Breast epithelium (tissue), 4 donors: ENCODE measurements at regions of chr1 and their contacts with region 1.

Region 1: DNA sequence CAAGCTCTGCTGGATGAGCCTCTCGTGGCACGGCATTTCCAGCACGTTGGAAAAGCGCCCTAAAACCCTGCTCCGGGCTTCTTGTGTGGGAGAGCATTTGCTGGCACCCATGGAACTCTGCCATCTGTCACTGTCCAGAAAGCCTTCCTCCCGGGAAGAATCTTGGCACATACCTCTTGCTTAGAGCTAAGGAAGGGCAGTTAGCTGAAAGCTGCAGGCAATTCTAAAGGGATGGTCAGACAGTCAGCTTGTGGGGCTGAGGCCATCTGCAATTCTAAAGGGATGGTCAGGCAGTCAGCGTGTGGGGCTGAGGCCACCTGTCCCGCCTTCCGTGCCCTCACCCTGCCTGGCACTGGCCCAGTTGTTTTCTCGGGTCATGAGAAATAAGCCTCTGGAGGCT is 139.0 kb upstream of the TMEM51 start:
- DNase-seq: no peak
- H3K4me3 ChIP-seq: no peak overlapping the region
- H3K27ac ChIP-seq: no peak overlapping the region
- H3K4me1 ChIP-seq: peaks cover 0 to 4% of the 10 kb centered on the region in 2 donors
- H3K27me3 ChIP-seq: no peaks in the 10 kb centered on the region
- CTCF ChIP-seq: no peak
- POLR2A ChIP-seq: no peak

Region 2: DNA sequence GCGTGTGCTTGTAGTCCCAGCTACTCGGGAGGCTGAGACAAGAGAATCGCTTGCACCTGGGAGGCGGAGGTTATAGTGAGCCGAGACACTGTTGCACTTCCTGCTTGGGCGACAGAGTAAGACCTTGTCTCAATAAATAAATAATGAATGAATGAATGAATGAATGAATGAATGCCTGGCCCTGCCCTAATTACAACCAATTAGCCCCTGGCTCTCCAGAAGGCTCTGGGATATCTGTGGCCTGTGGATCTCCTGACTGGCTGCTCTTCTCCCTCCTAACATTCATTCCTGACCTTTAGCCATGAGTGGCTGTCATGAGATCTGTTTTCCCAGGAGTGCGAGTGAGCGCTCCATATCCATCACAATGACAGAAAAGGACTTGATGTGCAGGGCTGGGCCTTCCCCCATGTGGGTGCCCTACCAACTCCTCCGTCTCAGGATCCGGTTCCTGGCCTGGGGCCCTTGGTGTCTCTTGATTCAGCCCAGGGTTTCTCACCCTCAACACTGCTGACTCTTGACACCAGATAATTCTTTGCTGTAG is 104.5 kb before region 1 on chr1:
- intact Hi-C with region 1: loop called (anchors 10 kb)
- DNase-seq: no peak
- H3K4me3 ChIP-seq: no peak overlapping the region
- H3K27ac ChIP-seq: peak overlapping the region; percentile 86 to 91
- H3K4me1 ChIP-seq: peaks cover 10 to 18% of the 10 kb centered on the region in 2 donors
- H3K27me3 ChIP-seq: no peaks in the 10 kb centered on the region
- CTCF ChIP-seq: no peak
- POLR2A ChIP-seq: no peak

Region 3: GRCh38 chr1:15062479-15063099 is 48.1 kb after region 1 on chr1:
- intact Hi-C with region 1: no loop called
- DNase-seq: no peak
- H3K4me3 ChIP-seq: no peak overlapping the region
- H3K27ac ChIP-seq: no peak overlapping the region
- H3K4me1 ChIP-seq: no peaks in the 10 kb centered on the region
- H3K27me3 ChIP-seq: no peaks in the 10 kb centered on the region
- CTCF ChIP-seq: peak; percentile 12 to 20 (median 16)
- POLR2A ChIP-seq: no peak